ENCODE measurements at regions of chr19 and their contacts with region 1.

Region 1: GRCh38 chr19:44723952-44724319 is 24.6 kb upstream of the BCL3 start:
- DNase-seq: peak; percentile 88
- H3K4me3 Mint-ChIP-seq: no peak overlapping the region
- H3K27ac Mint-ChIP-seq: no peak overlapping the region
- H3K4me1 Mint-ChIP-seq: peaks cover 45% of the 10 kb centered on the region
- H3K27me3 Mint-ChIP-seq: no peaks in the 10 kb centered on the region

Region 2: GRCh38 chr19:44653977-44654774 is 69.8 kb before region 1 on chr19:
- CTCF ChIA-PET with region 1: interaction called, 15 read pairs
- intact Hi-C with region 1: loop called (anchors 1 kb)
- DNase-seq: peak; percentile 91
- H3K4me3 Mint-ChIP-seq: no peak overlapping the region
- H3K27ac Mint-ChIP-seq: no peak overlapping the region
- H3K4me1 Mint-ChIP-seq: peaks cover 7% of the 10 kb centered on the region
- H3K27me3 Mint-ChIP-seq: peaks cover 2% of the 10 kb centered on the region

Region 3: GRCh38 chr19:44712864-44713515 is 10.9 kb before region 1 on chr19:
- CTCF ChIA-PET with region 1: interaction called, 12 read pairs
- intact Hi-C with region 1: no loop called
- DNase-seq: no peak
- H3K4me3 Mint-ChIP-seq: no peak overlapping the region
- H3K27ac Mint-ChIP-seq: no peak overlapping the region
- H3K4me1 Mint-ChIP-seq: peaks cover 4% of the 10 kb centered on the region
- H3K27me3 Mint-ChIP-seq: no peaks in the 10 kb centered on the region

Region 4: DNA sequence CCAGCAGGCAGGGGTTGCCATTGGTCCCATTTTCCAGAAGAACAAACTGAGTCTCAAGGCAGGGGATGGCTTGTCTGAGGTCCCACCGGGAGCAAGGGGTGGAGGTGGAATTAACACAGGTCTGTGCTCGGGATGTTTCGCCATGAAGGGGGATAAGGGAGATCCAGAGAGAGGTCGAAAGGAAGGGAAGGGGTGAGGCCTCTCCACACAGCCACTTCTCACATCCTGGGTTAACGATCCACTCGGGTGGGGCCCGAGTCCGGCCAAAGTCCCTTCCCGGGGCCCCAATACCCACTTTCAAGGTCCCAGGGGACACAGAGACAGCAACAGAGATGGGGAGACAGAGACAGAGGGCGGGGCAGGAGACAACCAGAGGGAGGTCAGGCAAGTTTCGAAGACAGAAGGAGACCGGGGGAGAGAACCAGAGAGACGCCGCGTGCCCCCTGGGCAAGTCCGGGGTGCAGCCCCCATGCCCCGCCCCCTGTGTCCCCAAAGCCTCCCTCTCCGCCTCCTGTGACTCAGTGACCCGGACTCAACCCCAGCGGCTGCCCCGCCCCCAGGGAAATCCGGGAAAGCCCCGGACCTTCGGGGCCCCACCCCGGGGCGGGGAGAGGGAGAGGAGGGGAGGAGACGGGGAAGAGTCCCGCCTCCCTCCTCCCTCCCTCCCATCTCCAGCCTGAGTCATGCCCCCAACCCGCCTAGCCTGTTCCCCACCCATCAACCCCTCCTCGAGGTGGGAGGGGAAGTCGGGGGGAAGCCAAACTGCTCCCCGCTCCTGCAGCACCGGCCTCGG is 23.2 kb after region 1 on chr19:
- CTCF ChIA-PET with region 1: interaction called, 20 read pairs
- intact Hi-C with region 1: loop called (anchors 1 kb)
- DNase-seq: peak; percentile 97
- H3K4me3 Mint-ChIP-seq: peak overlapping the region; percentile 87
- H3K27ac Mint-ChIP-seq: peak overlapping the region; percentile 95
- H3K4me1 Mint-ChIP-seq: peaks cover 56% of the 10 kb centered on the region
- H3K27me3 Mint-ChIP-seq: no peaks in the 10 kb centered on the region

Region 5: GRCh38 chr19:44782729-44783128 is 58.8 kb after region 1 on chr19:
- CTCF ChIA-PET with region 1: interaction called, 21 read pairs
- intact Hi-C with region 1: no loop called
- DNase-seq: no peak
- H3K4me3 Mint-ChIP-seq: no peak overlapping the region
- H3K27ac Mint-ChIP-seq: no peak overlapping the region
- H3K4me1 Mint-ChIP-seq: peaks cover 4% of the 10 kb centered on the region
- H3K27me3 Mint-ChIP-seq: peaks cover 10% of the 10 kb centered on the region

Region 6: GRCh38 chr19:44820648-44821609 is 97.0 kb after region 1 on chr19:
- CTCF ChIA-PET with region 1: no interaction called
- intact Hi-C with region 1: no loop called
- DNase-seq: no peak
- H3K4me3 Mint-ChIP-seq: no peak overlapping the region
- H3K27ac Mint-ChIP-seq: no peak overlapping the region
- H3K4me1 Mint-ChIP-seq: no peaks in the 10 kb centered on the region
- H3K27me3 Mint-ChIP-seq: peaks cover 3% of the 10 kb centered on the region

Region 7: GRCh38 chr19:44954824-44955586 is 231.1 kb after region 1 on chr19 and contains the start of gene CLPTM1:
- CTCF ChIA-PET with region 1: interaction called, 6 read pairs
- intact Hi-C with region 1: loop called (anchors 2 kb)
- DNase-seq: peak; percentile 98
- H3K4me3 Mint-ChIP-seq: peak within 1 kb of the TSS; percentile 98
- H3K27ac Mint-ChIP-seq: peak within 1 kb of the TSS; percentile 98
- H3K4me1 Mint-ChIP-seq: peaks cover 48% of the 10 kb centered on the region
- H3K27me3 Mint-ChIP-seq: no peaks in the 10 kb centered on the region
- total RNA-seq, gene CLPTM1: 32.4 to 34.6 TPM